H1 (cell line): ENCODE measurements at regions of chr17 and their contacts with region 1.

Region 1: DNA sequence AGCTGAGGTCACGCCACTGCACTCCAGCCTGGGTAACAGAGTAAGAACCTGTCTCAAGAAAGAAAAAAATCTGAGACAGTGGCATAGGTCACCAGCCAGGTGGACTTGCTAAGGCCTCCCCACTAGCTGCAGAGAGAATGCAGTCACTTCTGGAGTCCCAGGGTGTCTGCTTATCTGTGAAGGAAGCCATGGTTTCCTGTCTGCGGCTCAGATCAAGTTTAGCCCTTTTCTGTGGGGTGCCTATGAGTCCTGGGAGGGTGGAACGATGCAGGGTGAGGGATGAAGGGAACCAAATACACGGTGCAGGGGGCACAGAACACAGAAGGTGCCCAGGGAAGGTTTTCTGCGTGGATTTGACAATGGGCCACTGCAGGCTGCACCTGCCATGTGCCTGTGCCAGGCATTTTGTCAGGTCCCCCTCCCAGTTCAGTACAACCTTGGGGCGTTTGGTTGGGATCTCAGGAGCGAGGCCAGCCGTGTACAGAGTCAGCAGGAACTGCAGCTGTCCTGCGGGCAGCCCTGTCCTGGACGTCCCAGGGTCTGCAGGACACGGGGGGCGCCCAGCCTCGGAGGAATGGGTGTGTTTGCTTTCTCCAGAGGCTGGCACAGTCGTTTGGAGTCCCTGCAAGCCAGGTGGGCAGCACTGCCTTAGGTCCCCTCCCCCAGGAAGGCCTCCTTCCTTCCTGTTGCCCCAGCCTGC is 41.8 kb downstream of the RAB11FIP4 start:
- DNase-seq: no peak
- H3K4me3 ChIP-seq: no peak overlapping the region
- H3K27ac ChIP-seq: no peak overlapping the region
- H3K4me1 ChIP-seq: peaks cover 0 to 11% (median 3%) of the 10 kb centered on the region in 4 experiments; a peak in 3 of 7 replicates
- H3K27me3 ChIP-seq: no peaks in the 10 kb centered on the region
- CTCF ChIP-seq: no peak
- EP300 ChIP-seq: no peak
- POLR2A ChIP-seq: no peak
- RAD21 ChIP-seq: no peak

Region 2: GRCh38 chr17:31147507-31148202 is 285.6 kb before region 1 on chr17:
- CTCF ChIA-PET with region 1: no interaction called
- POLR2A ChIA-PET with region 1: no interaction called
- DNase-seq: no peak
- H3K4me3 ChIP-seq: no peak overlapping the region
- H3K27ac ChIP-seq: no peak overlapping the region
- H3K4me1 ChIP-seq: peaks cover 0 to 5% (median 1%) of the 10 kb centered on the region in 4 experiments; a peak in 3 of 7 replicates
- H3K27me3 ChIP-seq: no peaks in the 10 kb centered on the region
- CTCF ChIP-seq: no peak
- EP300 ChIP-seq: no peak
- POLR2A ChIP-seq: no peak
- RAD21 ChIP-seq: no peak

Region 3: DNA sequence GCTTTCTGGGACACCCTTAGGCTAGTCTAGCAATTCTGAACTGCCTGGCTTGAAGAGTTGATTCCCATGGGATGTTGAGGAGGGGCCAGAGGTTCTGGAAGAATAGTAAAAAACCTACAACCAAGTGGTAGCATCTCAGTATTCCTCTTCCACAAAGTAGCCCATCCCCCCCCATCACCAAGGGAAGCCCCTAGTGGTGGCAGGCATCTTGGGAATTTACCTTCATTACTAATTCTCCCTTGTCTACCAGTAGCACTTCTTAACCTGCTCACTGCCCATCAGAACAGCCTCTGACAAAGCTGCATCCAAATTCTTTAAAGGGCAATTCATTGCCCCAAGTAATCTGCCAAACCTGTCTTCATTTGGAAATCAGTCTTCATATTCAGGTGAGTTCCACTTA is 54.6 kb before region 1 on chr17:
- CTCF ChIA-PET with region 1: no interaction called
- POLR2A ChIA-PET with region 1: no interaction called
- DNase-seq: no peak
- H3K4me3 ChIP-seq: no peak overlapping the region
- H3K27ac ChIP-seq: no peak overlapping the region
- H3K4me1 ChIP-seq: peaks cover 3 to 10% (median 6%) of the 10 kb centered on the region in 4 experiments
- H3K27me3 ChIP-seq: no peaks in the 10 kb centered on the region
- CTCF ChIP-seq: peak; percentile 29 to 49 (median 44)
- EP300 ChIP-seq: no peak
- POLR2A ChIP-seq: no peak
- RAD21 ChIP-seq: peak in 1 of 2 experiments; percentile 25; a peak in 1 of 4 replicates

Region 4: GRCh38 chr17:31388770-31389661 is 44.2 kb before region 1 on chr17:
- CTCF ChIA-PET with region 1: interaction called, 19 read pairs
- POLR2A ChIA-PET with region 1: interaction called, 3 read pairs
- DNase-seq: peak in 1 of 2 experiments; percentile 87
- H3K4me3 ChIP-seq: peak overlapping the region in 1 of 4 experiments; percentile 30; a peak in 1 of 8 replicates
- H3K27ac ChIP-seq: no peak overlapping the region
- H3K4me1 ChIP-seq: peaks cover 0 to 14% (median 9%) of the 10 kb centered on the region in 4 experiments; a peak in 6 of 7 replicates
- H3K27me3 ChIP-seq: peaks cover 1 to 29% (median 22%) of the 10 kb centered on the region in 4 experiments
- CTCF ChIP-seq: peak; percentile 78 to 89 (median 85)
- EP300 ChIP-seq: no peak
- POLR2A ChIP-seq: no peak
- RAD21 ChIP-seq: peak; percentile 67 to 79

Region 5: GRCh38 chr17:31448467-31449077 is 15.3 kb after region 1 on chr17:
- CTCF ChIA-PET with region 1: interaction called, 44 read pairs
- POLR2A ChIA-PET with region 1: no interaction called
- DNase-seq: no peak
- H3K4me3 ChIP-seq: no peak overlapping the region
- H3K27ac ChIP-seq: no peak overlapping the region
- H3K4me1 ChIP-seq: peaks cover 0 to 9% (median under 1%) of the 10 kb centered on the region in 4 experiments; a peak in 2 of 7 replicates
- H3K27me3 ChIP-seq: no peaks in the 10 kb centered on the region
- CTCF ChIP-seq: no peak
- EP300 ChIP-seq: no peak
- POLR2A ChIP-seq: no peak
- RAD21 ChIP-seq: no peak

Region 6: DNA sequence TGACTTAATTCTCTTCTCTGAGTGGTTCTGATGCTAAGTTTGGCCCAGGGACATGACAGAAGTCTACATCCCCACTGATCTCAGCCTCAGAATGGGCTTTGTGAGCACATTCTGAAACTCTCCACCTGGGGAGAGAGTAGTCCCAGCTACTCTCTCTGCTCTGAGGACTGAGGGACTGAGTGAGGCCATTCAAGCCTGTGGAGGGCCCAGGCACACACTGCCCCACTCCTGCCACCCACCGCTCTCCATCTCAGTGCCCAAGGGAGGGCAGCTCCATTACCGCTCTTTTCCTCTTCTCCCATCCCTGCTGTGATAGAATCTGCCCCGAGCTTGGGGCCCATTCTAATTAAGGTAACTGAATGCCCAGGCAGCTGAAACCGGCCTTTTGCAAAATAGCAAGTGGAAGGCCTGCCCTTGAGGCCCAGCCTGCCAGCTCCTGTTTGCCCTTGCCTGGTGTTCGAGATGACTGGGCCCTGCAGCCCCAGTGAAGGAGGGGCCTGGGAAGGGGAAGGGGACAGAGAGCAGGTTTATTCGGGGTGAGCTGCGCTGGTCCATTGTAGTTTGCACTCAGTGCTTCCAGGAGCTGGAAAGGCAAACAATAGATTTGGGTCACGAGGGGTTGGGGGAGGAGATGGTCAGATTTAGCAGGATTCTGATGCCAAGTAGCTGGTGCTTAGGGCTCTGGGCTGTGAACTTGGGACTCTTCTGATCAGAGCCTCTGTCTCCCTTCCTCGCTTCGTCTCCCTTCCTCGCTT is 34.4 kb after region 1 on chr17:
- CTCF ChIA-PET with region 1: interaction called, 19 read pairs
- POLR2A ChIA-PET with region 1: no interaction called
- DNase-seq: peak in 1 of 2 experiments; percentile 58
- H3K4me3 ChIP-seq: no peak overlapping the region
- H3K27ac ChIP-seq: peak overlapping the region; percentile 52; the same call in 1 of the 2 replicates
- H3K4me1 ChIP-seq: peaks cover 9 to 34% (median 19%) of the 10 kb centered on the region in 4 experiments
- H3K27me3 ChIP-seq: no peaks in the 10 kb centered on the region
- CTCF ChIP-seq: no peak
- EP300 ChIP-seq: no peak
- POLR2A ChIP-seq: no peak
- RAD21 ChIP-seq: no peak

Region 7: GRCh38 chr17:31508288-31509094 is 75.2 kb after region 1 on chr17:
- CTCF ChIA-PET with region 1: interaction called, 144 read pairs
- POLR2A ChIA-PET with region 1: no interaction called
- DNase-seq: no peak
- H3K4me3 ChIP-seq: no peak overlapping the region
- H3K27ac ChIP-seq: no peak overlapping the region
- H3K4me1 ChIP-seq: peaks cover 0 to 9% (median 5%) of the 10 kb centered on the region in 4 experiments; a peak in 5 of 7 replicates
- H3K27me3 ChIP-seq: no peaks in the 10 kb centered on the region
- CTCF ChIP-seq: peak; percentile 45 to 68 (median 57)
- EP300 ChIP-seq: no peak
- POLR2A ChIP-seq: no peak
- RAD21 ChIP-seq: peak; percentile 38 to 61

Region 8: GRCh38 chr17:31517524-31517923 is 84.3 kb after region 1 on chr17:
- CTCF ChIA-PET with region 1: interaction called, 325 read pairs
- POLR2A ChIA-PET with region 1: interaction called, 3 read pairs
- DNase-seq: peak in 1 of 2 experiments; percentile 73
- H3K4me3 ChIP-seq: no peak overlapping the region
- H3K27ac ChIP-seq: no peak overlapping the region
- H3K4me1 ChIP-seq: peaks cover 0 to 4% (median 1%) of the 10 kb centered on the region in 4 experiments; a peak in 3 of 7 replicates
- H3K27me3 ChIP-seq: no peaks in the 10 kb centered on the region
- CTCF ChIP-seq: peak; percentile 57 to 71 (median 69)
- EP300 ChIP-seq: no peak
- POLR2A ChIP-seq: no peak
- RAD21 ChIP-seq: peak; percentile 82 to 91